ENCODE measurements at regions of chr5 and their contacts with region 1.

Region 1: DNA sequence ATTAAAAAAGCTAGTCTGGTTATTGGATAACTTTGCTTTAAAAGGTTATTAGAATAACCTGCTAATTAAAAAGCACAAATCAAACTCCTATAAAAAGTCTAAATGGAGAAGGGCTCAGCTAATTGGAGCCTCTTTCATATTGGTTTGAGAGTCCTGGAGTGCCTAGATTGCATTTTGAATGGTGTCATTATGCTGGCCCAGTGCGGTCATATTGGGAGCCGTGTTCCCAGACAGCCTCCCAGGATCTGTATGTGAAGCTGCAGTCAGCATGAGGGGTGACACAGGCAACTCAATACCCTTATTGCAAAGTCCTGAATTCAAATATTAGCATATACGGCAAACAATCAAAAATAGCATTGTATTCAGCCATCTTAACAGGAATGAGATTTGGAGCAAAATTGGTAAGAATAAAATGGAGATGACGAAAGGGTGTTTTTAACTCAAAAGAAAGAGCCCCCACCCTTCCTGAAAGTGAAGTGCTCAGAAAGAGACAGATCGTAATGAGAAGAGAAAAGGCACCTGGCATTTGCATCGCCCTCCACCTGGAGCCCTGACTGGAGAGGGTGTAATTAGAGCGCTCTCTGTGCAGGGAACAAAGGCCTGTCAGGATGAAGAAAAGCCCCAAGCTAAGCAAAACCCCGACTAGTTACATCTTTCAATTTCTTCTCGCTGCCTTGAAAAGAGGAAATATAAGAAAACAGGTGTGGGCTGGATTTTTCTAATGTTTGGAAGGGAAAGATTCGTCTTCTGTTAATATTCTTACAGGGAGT is 621.0 kb upstream of the ADAMTS16 start:
- DNase-seq: no peak
- ATAC-seq: no peak
- H3K4me3 ChIP-seq: no peak overlapping the region
- H3K27ac ChIP-seq: no peak overlapping the region
- H3K4me1 ChIP-seq: no peaks in the 10 kb centered on the region
- H3K27me3 ChIP-seq: no peaks in the 10 kb centered on the region

Region 2: GRCh38 chr5:4699592-4699991 is 180.5 kb after region 1 on chr5:
- intact Hi-C with region 1: loop called in 1 of 4 experiments (anchors 5 kb)
- DNase-seq: no peak
- ATAC-seq: no peak
- H3K4me3 ChIP-seq: no peak overlapping the region
- H3K27ac ChIP-seq: no peak overlapping the region
- H3K4me1 ChIP-seq: no peaks in the 10 kb centered on the region
- H3K27me3 ChIP-seq: no peaks in the 10 kb centered on the region

Measured in right cardiac atrium (tissue), 5 donors.